Cardiac septum (tissue), 1 donor: ENCODE measurements at regions of chr16 and their contacts with region 1.

Region 1: DNA sequence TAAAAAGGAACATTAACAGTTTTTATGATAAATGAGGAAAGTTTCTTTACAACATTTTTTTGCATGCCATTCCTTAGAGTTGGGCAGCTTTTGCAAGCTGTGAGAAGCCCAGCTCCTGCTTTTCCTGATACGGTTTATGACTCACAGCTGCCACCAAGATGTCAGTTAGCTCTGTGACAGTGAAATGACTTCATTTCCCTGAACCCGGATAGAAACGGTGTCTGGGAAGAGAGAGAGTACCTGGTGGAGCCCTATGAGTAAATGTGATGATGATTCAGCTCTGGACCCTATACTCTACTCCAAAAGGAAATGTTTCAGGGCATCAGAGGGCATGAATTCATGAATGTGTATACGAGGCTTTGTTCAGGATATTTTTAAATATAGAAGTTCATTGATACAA is 366.3 kb upstream of the HSBP1 start:
- DNase-seq: no peak

Region 2: DNA sequence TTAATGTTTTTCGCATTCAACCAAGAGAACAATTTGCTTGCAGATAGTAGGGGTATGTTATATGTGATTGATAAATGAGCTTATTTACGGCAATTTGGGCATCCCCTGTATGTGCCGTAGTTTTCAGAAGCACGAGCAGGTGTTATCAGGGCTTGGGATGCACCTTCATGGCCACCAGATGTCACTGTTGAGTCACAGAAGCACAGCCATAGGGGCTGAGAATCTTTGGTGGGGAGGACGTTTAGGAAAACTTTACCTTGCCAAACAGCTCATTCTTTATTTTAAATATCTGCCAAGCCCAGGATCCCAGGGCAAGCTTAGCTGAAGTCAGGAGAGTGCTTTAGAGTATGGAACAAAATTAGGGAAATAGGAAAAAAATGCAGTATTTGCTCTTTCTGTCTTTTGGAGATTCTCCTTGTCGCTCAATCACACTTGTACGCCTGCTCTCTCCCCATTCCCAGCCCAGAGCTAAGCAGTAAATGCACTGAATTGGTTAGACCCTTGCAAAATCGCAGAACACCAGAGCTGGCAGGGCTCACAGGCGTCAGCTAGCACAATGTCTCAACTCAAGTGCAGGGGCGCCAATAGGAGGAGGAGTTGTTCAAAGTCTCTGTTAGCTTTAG is 1177.9 kb before region 1 on chr16:
- intact Hi-C with region 1: loop called (anchors 10 kb)
- DNase-seq: no peak

Region 3: DNA sequence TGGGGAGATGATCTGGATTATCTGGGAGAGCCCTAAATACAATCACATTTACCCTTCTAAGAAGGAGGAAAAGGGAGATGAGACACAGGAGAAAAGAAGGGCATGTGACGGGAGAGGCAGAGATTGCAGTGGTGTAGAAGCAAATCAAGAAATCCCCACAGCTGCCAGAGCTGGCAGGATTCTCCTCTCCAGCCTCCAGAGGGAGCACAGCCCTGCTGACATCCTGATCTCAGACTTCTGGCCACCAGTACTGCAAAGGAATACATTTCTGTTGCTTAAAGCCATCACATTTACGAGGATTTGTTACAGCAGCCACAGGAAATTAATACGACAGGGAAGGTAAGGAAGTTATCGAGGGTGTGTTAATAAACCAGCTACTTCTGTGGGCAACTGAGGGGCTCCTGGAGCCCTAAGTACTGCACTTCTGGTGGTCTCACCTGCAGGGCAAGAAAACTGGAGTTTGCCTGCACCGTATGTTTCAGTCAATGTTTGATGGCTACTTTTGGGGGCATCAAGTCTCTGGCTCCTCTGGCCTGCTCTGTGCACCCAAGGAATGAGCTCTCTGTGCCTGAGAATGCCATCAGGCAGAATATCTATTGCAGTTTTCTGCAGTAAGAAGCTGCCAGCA is 837.6 kb before region 1 on chr16:
- intact Hi-C with region 1: loop called (anchors 10 kb)
- DNase-seq: no peak

Region 4: GRCh38 chr16:83068686-83069085 is 372.8 kb before region 1 on chr16:
- intact Hi-C with region 1: loop called (anchors 10 kb)
- DNase-seq: no peak

Region 5: DNA sequence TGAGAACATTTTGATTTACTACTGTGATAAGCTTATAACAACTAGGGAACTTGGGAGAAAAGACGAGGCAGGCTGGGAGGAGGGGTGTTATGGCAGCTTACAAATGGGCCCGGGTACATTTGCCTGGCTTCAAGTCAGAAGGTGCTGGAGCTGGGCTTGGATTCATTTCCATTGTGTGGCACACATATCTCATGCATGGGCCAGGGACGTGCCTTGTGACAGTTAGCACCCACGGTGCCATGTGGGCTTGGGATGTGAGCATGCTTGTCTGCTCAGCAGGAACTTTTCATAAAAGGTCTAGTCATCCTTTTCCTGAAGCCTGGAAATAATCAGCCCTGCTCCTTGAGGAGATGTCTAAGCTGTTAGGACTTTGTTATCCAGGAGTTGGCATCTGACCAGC is 242.5 kb before region 1 on chr16:
- intact Hi-C with region 1: loop called (anchors 10 kb)
- DNase-seq: no peak